CD4-positive, alpha-beta memory T cell (primary cell): ENCODE measurements at regions of chrX and their contacts with region 1.

Region 1: DNA sequence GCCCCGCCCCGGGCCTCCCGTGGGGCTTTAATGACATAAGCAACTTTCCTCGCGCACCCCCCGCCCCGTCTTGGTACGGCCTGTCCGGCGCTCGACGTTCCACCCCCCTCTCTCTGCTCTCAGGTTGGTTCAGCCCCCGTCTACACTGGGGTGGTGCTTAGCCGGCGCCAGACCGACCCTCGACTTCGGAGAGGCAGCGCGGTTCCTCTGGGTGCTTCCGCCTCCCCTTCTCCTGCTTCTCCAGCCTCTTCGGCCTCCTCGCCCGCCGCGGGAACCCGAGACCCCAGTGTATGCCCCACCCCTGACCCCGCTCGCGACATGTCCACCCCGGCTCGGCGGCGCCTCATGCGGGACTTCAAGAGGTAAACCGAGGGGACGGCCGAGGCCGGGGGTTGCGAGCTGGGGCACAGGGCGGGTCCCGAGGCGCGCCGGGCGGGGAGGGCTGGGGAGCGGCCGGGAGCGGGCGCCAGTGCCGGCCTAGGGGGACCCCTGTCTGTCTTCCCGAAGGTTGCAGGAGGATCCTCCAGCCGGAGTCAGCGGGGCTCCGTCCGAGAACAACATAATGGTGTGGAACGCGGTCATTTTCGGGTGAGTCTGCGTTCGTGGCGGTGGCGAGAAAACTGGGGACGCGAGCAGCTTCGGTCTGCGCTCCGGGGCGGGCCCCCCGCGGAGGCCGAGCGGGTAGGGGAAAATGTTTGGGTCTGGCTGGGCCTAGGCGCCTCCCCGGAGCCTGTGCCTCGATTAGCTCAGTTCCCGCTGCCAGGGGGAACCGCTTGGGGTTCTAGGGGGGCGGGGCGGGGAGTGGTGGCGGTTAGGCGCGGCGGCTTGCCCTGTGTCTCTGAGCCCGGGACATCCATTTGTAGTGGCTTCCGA is at the start of gene UBE2A:
- DNase-seq: peak; percentile 86 to 89 (median 89)
- H3K4me3 ChIP-seq: peak within 1 kb of the TSS in 1 of 2 donors; percentile 63
- H3K4me3 Mint-ChIP-seq: peak within 1 kb of the TSS; percentile 85 to 94 (median 92)
- H3K27ac ChIP-seq: peak within 1 kb of the TSS; percentile 78
- H3K27ac Mint-ChIP-seq: peak within 1 kb of the TSS; percentile 88 to 98 (median 96)
- H3K4me1 ChIP-seq: peaks cover 22% of the 10 kb centered on the region
- H3K4me1 Mint-ChIP-seq: peaks cover 2 to 33% (median 16%) of the 10 kb centered on the region in 4 donors
- H3K27me3 ChIP-seq: no peaks in the 10 kb centered on the region
- H3K27me3 Mint-ChIP-seq: no peaks in the 10 kb centered on the region
- total RNA-seq, gene UBE2A: 46.7 to 52.5 TPM

Region 2: GRCh38 chrX:119606280-119607015 is 31.8 kb after region 1 on chrX and contains the start of gene NKRF:
- CTCF ChIA-PET with region 1: interaction called, 3 read pairs
- POLR2A ChIA-PET with region 1: interaction called, 34 read pairs
- intact Hi-C with region 1: loop called (anchors 1 kb)
- DNase-seq: peak; percentile 87 to 94 (median 89)
- H3K4me3 ChIP-seq: peak within 1 kb of the TSS; percentile 73 to 84
- H3K4me3 Mint-ChIP-seq: peak within 1 kb of the TSS; percentile 91 to 97 (median 95)
- H3K27ac ChIP-seq: peak within 1 kb of the TSS; percentile 85
- H3K27ac Mint-ChIP-seq: peak within 1 kb of the TSS; percentile 93 to 99 (median 99)
- H3K4me1 ChIP-seq: peaks cover 26% of the 10 kb centered on the region
- H3K4me1 Mint-ChIP-seq: peaks cover 10 to 46% (median 28%) of the 10 kb centered on the region in 4 donors
- H3K27me3 ChIP-seq: no peaks in the 10 kb centered on the region
- H3K27me3 Mint-ChIP-seq: no peaks in the 10 kb centered on the region
- total RNA-seq, gene NKRF: 13.0 to 14.2 TPM

Region 3: GRCh38 chrX:119661486-119661885 is 86.9 kb after region 1 on chrX:
- CTCF ChIA-PET with region 1: no interaction called
- POLR2A ChIA-PET with region 1: no interaction called
- intact Hi-C with region 1: no loop called
- DNase-seq: no peak
- H3K4me3 ChIP-seq: no peak overlapping the region
- H3K4me3 Mint-ChIP-seq: peak overlapping the region in 1 of 8 donors; percentile 31
- H3K27ac ChIP-seq: no peak overlapping the region
- H3K27ac Mint-ChIP-seq: peak overlapping the region in 3 of 7 donors; percentile 65 to 69 (median 65)
- H3K4me1 ChIP-seq: peaks cover 5% of the 10 kb centered on the region
- H3K4me1 Mint-ChIP-seq: peaks cover 18 to 38% (median 28%) of the 10 kb centered on the region in 4 donors
- H3K27me3 ChIP-seq: no peaks in the 10 kb centered on the region
- H3K27me3 Mint-ChIP-seq: no peaks in the 10 kb centered on the region

Region 4: GRCh38 chrX:119852382-119853353 is 278.0 kb after region 1 on chrX and contains the start of gene UPF3B:
- CTCF ChIA-PET with region 1: no interaction called
- POLR2A ChIA-PET with region 1: interaction called, 3 read pairs
- intact Hi-C with region 1: loop called (anchors 1 kb)
- DNase-seq: peak; percentile 88 to 98 (median 94)
- H3K4me3 ChIP-seq: peak within 1 kb of the TSS; percentile 54 to 82
- H3K4me3 Mint-ChIP-seq: peak within 1 kb of the TSS; percentile 96 to 100 (median 99)
- H3K27ac ChIP-seq: peak within 1 kb of the TSS; percentile 95
- H3K27ac Mint-ChIP-seq: peak within 1 kb of the TSS; percentile 92 to 100 (median 99)
- H3K4me1 ChIP-seq: peaks cover 10% of the 10 kb centered on the region
- H3K4me1 Mint-ChIP-seq: peaks cover 10 to 17% (median 14%) of the 10 kb centered on the region in 4 donors
- H3K27me3 ChIP-seq: no peaks in the 10 kb centered on the region
- H3K27me3 Mint-ChIP-seq: no peaks in the 10 kb centered on the region
- total RNA-seq, gene UPF3B: 11.1 to 12.1 TPM